Dendritic cell treated with granulocyte-macrophage colony-stimulating factor and Interleukin-4, amounts not matched to agents 40 ng/mL and 50 ng/mL, for 4 days (primary cell): ENCODE measurements at regions of chr5 and their contacts with region 1.

Region 1: DNA sequence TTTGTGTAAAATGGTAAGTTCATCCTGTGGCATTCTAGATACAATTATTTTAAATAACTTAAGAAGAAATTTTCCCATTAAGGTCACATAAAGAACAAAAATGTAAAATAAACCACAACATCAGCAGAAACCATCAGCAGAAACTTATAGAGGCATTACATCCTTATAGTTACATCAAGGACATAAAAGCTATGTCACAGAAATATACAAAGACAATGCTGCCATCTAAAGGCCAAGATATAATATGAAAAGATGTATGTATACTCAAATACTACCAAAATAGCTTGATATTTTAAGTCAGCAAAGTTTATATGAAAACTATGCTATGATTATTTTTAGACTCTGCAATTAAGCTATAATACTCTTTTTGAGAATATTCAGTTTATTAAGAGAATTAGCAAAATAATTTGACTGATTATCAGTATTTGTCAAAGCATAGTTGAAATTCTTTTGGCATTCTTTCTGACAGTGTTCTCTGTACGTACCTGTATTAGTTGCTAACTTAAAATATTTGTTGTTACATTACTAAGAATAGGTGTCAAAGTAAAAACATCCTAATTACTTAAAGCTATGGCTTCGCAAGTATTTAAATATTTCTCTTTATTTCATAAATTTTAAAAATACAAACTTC is 36.2 kb downstream of the FBXL17 start:
- H3K4me3 Mint-ChIP-seq: no peak overlapping the region
- H3K27ac Mint-ChIP-seq: no peak overlapping the region
- H3K4me1 Mint-ChIP-seq: no peaks in the 10 kb centered on the region
- H3K27me3 Mint-ChIP-seq: no peaks in the 10 kb centered on the region

Region 2: GRCh38 chr5:107673368-107674136 is 672.1 kb before region 1 on chr5:
- intact Hi-C with region 1: loop called (anchors 10 kb)
- H3K4me3 Mint-ChIP-seq: peak overlapping the region; percentile 69
- H3K27ac Mint-ChIP-seq: peak overlapping the region; percentile 33
- H3K4me1 Mint-ChIP-seq: peaks cover 48% of the 10 kb centered on the region
- H3K27me3 Mint-ChIP-seq: peaks cover 73% of the 10 kb centered on the region

Region 3: DNA sequence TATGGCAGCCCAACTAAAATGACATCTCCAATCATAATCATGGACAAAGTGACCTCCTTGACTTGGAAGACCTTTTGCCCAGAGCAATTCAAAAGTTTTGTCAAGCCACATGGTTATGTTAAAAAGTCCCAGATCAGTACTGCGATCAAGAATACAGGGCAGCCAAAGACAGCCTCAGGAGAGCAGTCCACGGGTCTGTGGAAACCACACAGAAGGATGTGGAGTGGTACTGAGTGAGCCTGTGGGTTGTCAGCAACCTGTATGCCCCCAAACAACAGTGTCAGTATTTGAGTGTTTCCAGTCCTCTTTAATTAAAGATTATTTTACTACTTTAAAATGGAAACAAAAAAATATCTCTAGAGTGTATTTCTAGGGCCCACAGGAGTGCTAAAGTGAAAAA is 329.6 kb before region 1 on chr5:
- intact Hi-C with region 1: no loop called
- H3K4me3 Mint-ChIP-seq: no peak overlapping the region
- H3K27ac Mint-ChIP-seq: no peak overlapping the region
- H3K4me1 Mint-ChIP-seq: no peaks in the 10 kb centered on the region
- H3K27me3 Mint-ChIP-seq: no peaks in the 10 kb centered on the region

Region 4: DNA sequence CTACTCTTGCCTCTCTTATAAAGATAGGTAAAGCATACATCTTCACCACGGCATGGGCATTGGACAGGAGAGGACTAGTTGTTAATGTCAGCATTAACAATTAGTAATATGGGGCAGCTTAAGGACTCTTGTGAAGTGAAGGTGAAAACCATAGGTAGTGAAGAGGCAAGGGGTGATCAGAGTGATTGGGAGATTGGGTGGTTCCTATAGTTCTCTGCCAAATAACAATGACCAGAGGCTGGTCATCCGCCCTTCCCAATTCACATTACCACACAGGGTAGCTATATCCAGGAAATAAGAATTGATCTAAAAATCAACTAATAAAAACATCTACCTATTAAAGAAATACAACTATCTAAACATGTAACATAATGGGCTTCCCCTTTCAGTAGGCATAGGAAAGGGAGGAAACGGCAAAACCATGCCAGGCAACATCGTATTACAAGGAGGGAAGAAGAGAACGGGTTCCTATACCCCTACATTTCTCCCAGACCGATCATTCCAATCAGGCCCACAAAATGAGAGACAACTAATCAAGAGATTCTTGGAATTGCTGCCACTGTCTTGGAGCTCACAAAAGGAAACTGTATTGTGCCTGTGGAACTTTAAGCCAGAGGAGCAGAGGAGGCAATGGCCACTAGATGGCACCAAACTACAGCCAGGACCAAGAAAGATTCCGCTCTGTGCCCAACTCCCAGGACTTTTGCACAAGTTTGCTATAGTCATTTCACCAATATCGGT is 85.4 kb before region 1 on chr5:
- intact Hi-C with region 1: loop called (anchors 1 kb)
- H3K4me3 Mint-ChIP-seq: peak overlapping the region; percentile 66
- H3K27ac Mint-ChIP-seq: no peak overlapping the region
- H3K4me1 Mint-ChIP-seq: no peaks in the 10 kb centered on the region
- H3K27me3 Mint-ChIP-seq: no peaks in the 10 kb centered on the region